ENCODE measurements at regions of chr2 and their contacts with region 1.

Region 1: DNA sequence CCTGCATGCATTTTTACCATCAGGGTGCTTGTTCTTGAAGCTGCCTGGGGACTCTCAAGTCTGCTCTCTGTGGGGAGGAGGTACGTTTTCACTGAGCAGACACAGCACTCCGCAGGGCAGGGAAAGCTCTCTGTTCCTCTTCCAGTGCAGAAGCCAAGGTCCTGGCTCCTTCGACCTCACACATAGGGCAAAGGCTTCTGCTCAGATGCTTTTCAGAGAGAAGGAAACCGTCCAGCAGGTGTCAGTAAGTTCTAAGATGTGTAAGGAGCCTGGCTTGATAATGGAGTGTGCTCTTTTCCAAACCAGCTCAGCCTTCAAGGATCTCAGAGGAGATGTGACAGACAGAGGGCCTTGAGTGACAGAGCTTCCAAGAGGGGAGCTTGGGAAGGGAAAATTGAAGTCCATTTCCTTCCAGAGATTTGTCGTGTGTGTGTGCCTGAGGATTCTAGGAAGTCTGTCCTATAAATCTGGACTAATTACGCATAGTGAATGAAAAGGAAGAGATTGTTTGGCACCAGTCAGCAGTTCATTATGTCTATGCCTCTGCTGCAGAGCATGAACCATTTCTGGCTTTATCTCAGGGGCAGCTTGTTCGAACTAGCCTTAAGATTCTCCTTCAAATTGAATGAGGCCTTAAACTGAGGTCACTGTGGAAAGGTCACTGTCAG is 67.3 kb upstream of the UPP2 start:
- DNase-seq: peak in 1 of 2 donors; percentile 54
- ATAC-seq: peak; percentile 50 to 75 (median 68)
- H3K4me3 ChIP-seq: no peak overlapping the region
- H3K27ac ChIP-seq: no peak overlapping the region
- H3K4me1 ChIP-seq: peaks cover 0 to 6% (median 0%) of the 10 kb centered on the region in 9 donors
- H3K27me3 ChIP-seq: peaks cover 0 to 3% (median 0%) of the 10 kb centered on the region in 7 donors
- CTCF ChIP-seq: peak; percentile 7 to 67 (median 52)

Region 2: GRCh38 chr2:158174495-158174894 is 140.2 kb after region 1 on chr2:
- intact Hi-C with region 1: loop called in 2 of 10 experiments (anchors 10 kb)
- DNase-seq: no peak
- ATAC-seq: no peak
- H3K4me3 ChIP-seq: no peak overlapping the region
- H3K27ac ChIP-seq: no peak overlapping the region
- H3K4me1 ChIP-seq: peaks cover 0 to 12% (median 1%) of the 10 kb centered on the region in 9 donors
- H3K27me3 ChIP-seq: peaks cover 0 to 3% (median 0%) of the 10 kb centered on the region in 7 donors
- CTCF ChIP-seq: no peak

Region 3: DNA sequence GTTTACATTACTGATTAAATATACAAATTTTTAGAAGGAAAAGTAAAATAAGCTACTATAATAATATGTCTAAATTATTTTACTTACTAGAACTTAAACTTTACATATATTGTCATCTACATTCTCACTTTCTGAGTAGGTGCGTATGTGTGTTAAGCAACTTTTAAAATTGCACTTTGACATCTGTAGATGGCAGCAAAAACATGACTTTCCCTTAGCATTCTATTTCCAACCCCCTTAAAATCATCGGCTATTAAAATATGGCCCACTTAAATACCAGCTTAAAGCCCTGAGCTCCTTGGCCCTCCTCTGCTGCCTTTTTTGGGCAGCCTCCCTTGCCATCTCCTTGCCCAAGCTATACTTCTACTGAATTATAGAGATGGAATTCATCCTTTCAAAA is 145.3 kb after region 1 on chr2:
- intact Hi-C with region 1: loop called in 3 of 10 experiments (anchors 5 to 10 kb)
- DNase-seq: no peak
- ATAC-seq: peak in 6 of 8 donors; percentile 23 to 75 (median 51)
- H3K4me3 ChIP-seq: no peak overlapping the region
- H3K27ac ChIP-seq: no peak overlapping the region
- H3K4me1 ChIP-seq: peaks cover 0 to 18% (median 4%) of the 10 kb centered on the region in 9 donors
- H3K27me3 ChIP-seq: peaks cover 0 to 3% (median 0%) of the 10 kb centered on the region in 7 donors
- CTCF ChIP-seq: peak in 7 of 9 donors; percentile 44 to 66 (median 60)

Region 4: DNA sequence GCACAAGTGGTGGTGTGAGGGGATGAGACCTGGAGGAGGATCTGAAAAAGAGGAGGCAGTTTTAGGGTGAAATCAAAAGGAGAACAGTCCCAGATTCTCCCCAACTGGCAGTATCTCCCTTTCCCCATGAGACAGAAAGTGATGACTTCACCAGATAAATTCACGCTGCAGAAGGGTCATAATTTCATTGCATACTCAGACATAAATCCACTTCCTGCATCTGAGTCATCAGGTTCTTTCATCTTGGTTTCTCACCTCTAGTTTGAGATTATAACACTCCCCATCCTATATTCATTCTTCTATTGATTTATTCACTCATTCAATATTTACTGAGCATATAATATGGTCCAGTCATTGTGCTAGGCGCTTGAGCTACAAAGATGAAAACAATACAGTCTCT is 357.5 kb after region 1 on chr2:
- intact Hi-C with region 1: loop called in 1 of 10 experiments (anchors 2 kb)
- DNase-seq: no peak
- ATAC-seq: no peak
- H3K4me3 ChIP-seq: no peak overlapping the region
- H3K27ac ChIP-seq: no peak overlapping the region
- H3K4me1 ChIP-seq: no peaks in the 10 kb centered on the region
- H3K27me3 ChIP-seq: no peaks in the 10 kb centered on the region
- CTCF ChIP-seq: no peak

Region 5: GRCh38 chr2:158667586-158667985 is 633.3 kb after region 1 on chr2:
- intact Hi-C with region 1: loop called in 1 of 10 experiments (anchors 10 kb)
- DNase-seq: no peak
- ATAC-seq: peak; percentile 42 to 79 (median 64)
- H3K4me3 ChIP-seq: no peak overlapping the region
- H3K27ac ChIP-seq: peak overlapping the region in 7 of 10 donors; percentile 28 to 77 (median 62)
- H3K4me1 ChIP-seq: peaks cover 3 to 66% (median 36%) of the 10 kb centered on the region in 9 donors
- H3K27me3 ChIP-seq: no peaks in the 10 kb centered on the region
- CTCF ChIP-seq: no peak

Region 6: DNA sequence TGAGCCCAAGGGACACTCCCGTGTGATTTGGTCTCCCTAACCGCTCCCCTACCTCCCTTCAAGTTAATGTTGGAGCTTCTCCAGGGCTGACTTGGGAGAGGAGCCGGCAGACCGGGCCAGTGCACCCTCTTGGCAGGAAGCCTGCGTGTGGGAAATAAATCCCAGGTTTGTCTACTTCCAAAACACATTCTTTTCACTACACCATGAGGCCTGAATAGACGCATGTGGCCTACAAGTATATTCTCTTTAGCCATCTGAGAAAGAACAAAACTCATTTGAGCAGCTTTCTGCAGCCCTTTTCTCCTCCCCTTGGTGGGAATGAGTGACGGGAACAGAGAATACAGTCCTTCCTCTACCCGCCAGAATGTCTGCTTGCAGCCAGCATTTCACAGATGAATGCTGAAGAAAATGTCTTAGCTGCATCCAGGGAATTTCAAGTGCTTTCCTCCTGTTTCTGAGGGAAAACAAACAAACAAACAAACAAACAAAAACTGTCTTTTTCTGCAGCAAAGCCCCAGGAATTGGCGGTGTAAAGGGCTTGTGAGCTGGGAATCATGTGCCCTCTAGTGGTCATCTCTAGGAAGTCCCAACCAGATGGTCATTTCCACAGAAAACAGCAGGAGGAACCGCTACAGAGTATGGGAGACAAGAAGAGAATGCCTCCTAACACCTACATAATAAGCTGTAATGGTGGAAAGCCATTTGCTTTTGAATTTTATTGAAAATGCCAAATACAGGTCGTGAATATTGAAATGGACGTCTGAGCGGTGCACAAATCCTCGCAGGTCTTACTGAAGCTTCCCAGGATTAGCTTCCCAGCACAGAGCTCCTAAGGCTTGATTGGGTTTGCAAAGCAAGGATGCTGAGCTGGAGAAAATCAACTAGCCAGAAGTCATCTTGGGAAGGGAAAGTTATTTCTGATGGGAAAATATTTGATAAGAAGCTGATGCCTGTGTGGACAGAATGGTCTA is 719.6 kb after region 1 on chr2:
- intact Hi-C with region 1: loop called in 7 of 10 experiments (anchors 1 to 10 kb)
- DNase-seq: peak in 1 of 2 donors; percentile 48
- ATAC-seq: peak; percentile 85 to 95 (median 90)
- H3K4me3 ChIP-seq: peak overlapping the region in 9 of 10 donors; percentile 1 to 44 (median 40)
- H3K27ac ChIP-seq: peak overlapping the region in 4 of 10 donors; percentile 6 to 49 (median 23)
- H3K4me1 ChIP-seq: peaks cover 0 to 15% (median 9%) of the 10 kb centered on the region in 9 donors
- H3K27me3 ChIP-seq: no peaks in the 10 kb centered on the region
- CTCF ChIP-seq: peak; percentile 83 to 95 (median 90)